Calu3 (cell line): ENCODE measurements at regions of chr4 and their contacts with region 1.

Region 1: DNA sequence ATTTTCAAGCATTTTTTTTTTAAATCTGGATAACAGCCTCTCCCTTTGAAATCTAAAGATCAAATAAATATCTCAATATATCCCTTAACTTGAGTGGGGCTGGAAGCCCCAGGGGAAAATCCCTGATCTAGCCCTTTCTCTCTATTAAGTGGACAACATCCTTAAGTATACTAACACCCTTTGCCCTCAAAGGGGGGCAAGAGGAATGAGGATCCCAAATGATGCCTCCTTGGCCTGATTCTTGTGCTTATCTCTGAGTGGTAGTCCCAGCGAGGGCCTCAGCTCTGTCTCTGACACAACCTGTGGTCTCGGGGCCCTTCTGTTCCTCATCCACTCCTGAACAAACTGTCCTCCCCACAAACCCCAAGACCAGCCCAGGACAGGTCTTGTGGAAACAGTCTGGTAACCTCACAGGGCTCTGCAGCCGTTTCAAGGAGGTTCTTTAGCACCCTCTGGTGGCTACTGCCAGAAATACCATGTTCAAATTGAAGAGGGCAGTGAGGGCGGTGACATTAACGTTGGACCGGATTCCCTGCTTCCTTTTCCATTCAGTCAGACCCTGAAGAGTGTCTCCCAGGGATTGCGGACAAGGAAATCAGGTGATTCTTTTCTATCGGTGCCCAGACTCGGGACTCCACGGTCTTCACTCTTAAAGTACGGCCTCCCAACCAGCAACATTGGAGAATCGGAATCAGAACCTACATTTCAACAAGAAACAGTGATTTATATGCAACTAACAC is 12.9 kb downstream of the CXCL13 start:
- DNase-seq: peak; percentile 77
- H3K4me3 Mint-ChIP-seq: peak overlapping the region; percentile 60
- H3K27ac Mint-ChIP-seq: peak overlapping the region; percentile 93
- H3K4me1 Mint-ChIP-seq: peaks cover 19% of the 10 kb centered on the region
- H3K27me3 Mint-ChIP-seq: no peaks in the 10 kb centered on the region
- CTCF ChIP-seq: peak; percentile 52

Region 2: DNA sequence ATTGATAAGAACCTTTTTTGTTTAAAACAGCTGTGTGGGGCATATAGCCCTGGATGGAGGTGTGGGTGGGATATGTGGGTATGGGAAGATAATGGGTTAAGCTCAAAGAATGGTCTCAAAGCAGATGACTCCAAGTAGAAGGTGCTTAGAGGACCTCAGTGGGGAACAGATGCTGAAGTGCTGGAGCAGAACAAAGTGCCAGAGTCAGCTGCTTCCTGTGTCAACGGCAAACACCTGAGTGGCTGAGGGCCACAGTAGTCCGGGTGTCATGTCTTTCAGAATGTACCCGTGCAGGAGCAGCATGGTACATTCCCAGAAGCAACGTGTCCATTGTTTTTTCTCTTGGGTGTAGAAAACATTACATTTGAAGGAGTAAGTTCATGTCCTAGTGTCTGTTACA is 250.9 kb before region 1 on chr4:
- CTCF ChIA-PET with region 1: interaction called, 6 read pairs
- intact Hi-C with region 1: loop called (anchors 5 kb)
- DNase-seq: no peak
- H3K4me3 Mint-ChIP-seq: no peak overlapping the region
- H3K27ac Mint-ChIP-seq: no peak overlapping the region
- H3K4me1 Mint-ChIP-seq: no peaks in the 10 kb centered on the region
- H3K27me3 Mint-ChIP-seq: peaks cover 43% of the 10 kb centered on the region
- CTCF ChIP-seq: no peak

Region 3: GRCh38 chr4:77385124-77385969 is 233.2 kb before region 1 on chr4:
- CTCF ChIA-PET with region 1: no interaction called
- intact Hi-C with region 1: loop called (anchors 1 kb)
- DNase-seq: peak; percentile 51
- H3K4me3 Mint-ChIP-seq: no peak overlapping the region
- H3K27ac Mint-ChIP-seq: no peak overlapping the region
- H3K4me1 Mint-ChIP-seq: no peaks in the 10 kb centered on the region
- H3K27me3 Mint-ChIP-seq: peaks cover 41% of the 10 kb centered on the region
- CTCF ChIP-seq: peak; percentile 60

Region 4: DNA sequence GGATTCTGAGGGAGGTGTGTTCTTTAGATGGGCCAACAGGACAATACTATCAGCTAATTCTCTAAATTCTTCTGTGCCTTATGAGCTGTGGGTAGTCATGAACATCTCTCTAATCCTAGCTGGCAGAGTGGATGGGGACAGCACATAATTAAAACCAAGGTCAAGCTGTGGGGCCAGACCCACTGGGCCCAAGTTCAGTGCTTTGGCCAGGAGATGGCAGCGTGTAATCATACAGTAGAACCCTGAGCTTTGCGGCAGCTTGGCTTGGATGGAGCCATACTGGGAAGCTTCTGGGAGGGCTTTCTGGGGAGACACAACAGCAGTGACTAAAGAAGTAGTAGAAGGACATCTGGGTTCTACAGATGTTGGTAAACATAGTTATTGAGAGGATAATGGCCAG is 153.3 kb before region 1 on chr4:
- CTCF ChIA-PET with region 1: interaction called, 6 read pairs
- intact Hi-C with region 1: loop called (anchors 5 kb)
- DNase-seq: peak; percentile 38
- H3K4me3 Mint-ChIP-seq: no peak overlapping the region
- H3K27ac Mint-ChIP-seq: no peak overlapping the region
- H3K4me1 Mint-ChIP-seq: no peaks in the 10 kb centered on the region
- H3K27me3 Mint-ChIP-seq: peaks cover 29% of the 10 kb centered on the region
- CTCF ChIP-seq: no peak

Region 5: DNA sequence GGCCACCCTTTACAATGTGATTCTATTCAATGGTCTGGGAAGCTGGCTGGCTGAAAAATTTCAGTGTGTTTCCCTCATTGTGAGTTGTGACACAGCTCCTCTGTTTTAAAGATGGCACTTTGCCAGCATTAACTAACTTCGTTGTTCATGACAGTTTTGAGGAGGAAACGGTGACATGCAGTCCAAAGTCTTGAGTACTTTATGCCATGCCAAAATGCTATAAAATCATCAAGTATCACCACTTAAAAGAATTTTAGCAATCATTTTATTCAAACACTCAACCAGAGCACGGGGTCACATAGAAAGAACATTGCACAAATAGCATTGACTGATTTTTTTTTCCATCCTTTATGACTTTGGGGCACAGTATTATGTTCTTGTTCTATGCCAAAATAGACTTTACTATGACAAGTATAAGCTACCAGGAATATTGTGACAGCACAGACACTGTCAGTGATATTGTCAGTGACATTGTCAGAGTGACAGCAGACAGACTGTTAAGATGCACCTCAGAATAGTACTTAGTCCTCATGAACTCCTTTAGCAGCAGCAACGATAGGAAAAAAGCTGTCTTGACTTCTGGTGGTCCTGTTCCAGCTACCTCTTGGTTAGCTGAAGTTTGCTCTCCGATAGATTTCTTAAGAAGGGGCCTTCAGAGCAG is 33.8 kb after region 1 on chr4:
- CTCF ChIA-PET with region 1: interaction called, 4 read pairs
- intact Hi-C with region 1: loop called (anchors 1 kb)
- DNase-seq: peak; percentile 34
- H3K4me3 Mint-ChIP-seq: no peak overlapping the region
- H3K27ac Mint-ChIP-seq: no peak overlapping the region
- H3K4me1 Mint-ChIP-seq: peaks cover 22% of the 10 kb centered on the region
- H3K27me3 Mint-ChIP-seq: no peaks in the 10 kb centered on the region
- CTCF ChIP-seq: no peak

Region 6: DNA sequence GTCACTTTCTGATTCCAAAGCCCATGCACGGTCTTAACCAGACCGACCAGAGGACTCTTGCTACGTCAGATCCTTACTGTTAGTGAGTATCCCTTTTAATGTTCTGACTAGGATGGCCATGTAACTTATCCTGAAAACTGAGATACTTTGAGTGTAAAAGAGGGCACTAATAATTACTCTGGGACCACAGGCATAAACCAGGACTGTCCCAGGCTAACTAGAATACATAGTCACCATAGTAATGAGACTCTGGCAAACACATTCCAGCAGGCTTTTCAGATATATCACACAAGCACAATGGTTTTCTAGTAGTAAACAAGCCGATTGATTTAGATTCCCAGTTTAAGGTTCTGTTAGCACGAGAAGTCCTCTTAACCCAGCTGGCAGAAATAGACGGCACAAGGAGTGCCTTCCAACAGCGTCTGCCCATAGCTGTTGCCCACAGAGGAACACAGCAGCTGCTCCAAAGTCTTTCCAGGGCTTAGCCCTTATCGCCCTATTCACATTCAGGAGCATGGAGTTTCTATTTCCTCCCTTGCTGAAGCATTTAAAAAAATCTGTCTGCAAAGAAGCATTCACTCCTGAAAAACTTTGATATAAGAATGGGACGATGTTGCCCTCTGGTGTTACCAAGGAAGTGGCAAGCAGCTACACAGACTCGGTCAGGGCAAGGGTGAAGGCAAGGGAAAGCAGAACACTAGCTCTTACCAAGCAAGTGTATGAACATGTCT is 79.5 kb after region 1 on chr4:
- CTCF ChIA-PET with region 1: interaction called, 11 read pairs
- intact Hi-C with region 1: loop called (anchors 1 kb)
- DNase-seq: peak; percentile 57
- H3K4me3 Mint-ChIP-seq: peak overlapping the region; percentile 26
- H3K27ac Mint-ChIP-seq: no peak overlapping the region
- H3K4me1 Mint-ChIP-seq: peaks cover 32% of the 10 kb centered on the region
- H3K27me3 Mint-ChIP-seq: no peaks in the 10 kb centered on the region
- CTCF ChIP-seq: peak; percentile 10